Mammary epithelial cell (primary cell): ENCODE measurements at regions of chr10 and their contacts with region 1.

Region 1: GRCh38 chr10:100878291-100878910 is 34.4 kb upstream of the SLF2 start:
- DNase-seq: peak; percentile 46
- H3K4me3 ChIP-seq: no peak overlapping the region
- H3K27ac ChIP-seq: no peak overlapping the region
- H3K4me1 ChIP-seq: no peaks in the 10 kb centered on the region
- H3K27me3 ChIP-seq: no peaks in the 10 kb centered on the region
- CTCF ChIP-seq: peak; percentile 61 to 89

Region 2: DNA sequence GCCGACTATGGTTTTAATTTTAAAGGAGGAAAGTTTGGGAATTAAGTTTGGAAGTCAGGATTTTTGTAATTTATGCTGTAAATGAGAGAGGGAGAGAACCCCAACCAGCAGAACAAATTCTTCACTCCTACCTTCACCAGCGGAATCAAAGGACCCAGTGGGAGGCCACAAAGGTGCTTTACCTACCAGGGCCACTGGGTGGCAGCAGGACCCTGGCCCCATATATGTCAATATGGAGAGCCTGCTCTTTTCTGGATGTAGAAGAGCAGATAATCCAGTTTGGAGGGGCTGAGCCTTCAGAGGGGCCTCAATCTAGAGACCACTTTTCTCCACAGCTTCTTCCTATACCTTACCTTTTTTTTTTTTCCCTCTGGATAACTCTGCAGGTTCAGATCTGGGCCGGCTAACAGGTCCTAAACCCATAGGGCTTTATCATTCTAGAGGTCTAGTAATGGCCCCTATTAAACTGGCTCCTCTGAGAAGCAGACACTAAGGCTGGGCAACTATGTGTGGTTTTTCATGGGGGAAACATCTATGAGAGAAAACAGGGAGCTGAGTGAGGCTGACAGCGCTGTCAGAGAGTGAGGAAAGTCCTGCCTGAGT is 539.9 kb before region 1 on chr10:
- CTCF ChIA-PET with region 1: no interaction called
- dilution Hi-C with region 1: loop called (anchors 25 kb)
- in situ Hi-C with region 1: loop called (anchors 25 kb)
- intact Hi-C with region 1: loop called (anchors 1 kb)
- DNase-seq: peak; percentile 38
- H3K4me3 ChIP-seq: no peak overlapping the region
- H3K27ac ChIP-seq: no peak overlapping the region
- H3K4me1 ChIP-seq: no peaks in the 10 kb centered on the region
- H3K27me3 ChIP-seq: no peaks in the 10 kb centered on the region
- CTCF ChIP-seq: peak; percentile 89 to 95

Region 3: GRCh38 chr10:100481462-100482081 is 396.8 kb before region 1 on chr10:
- CTCF ChIA-PET with region 1: no interaction called
- dilution Hi-C with region 1: no loop called
- in situ Hi-C with region 1: no loop called
- intact Hi-C with region 1: loop called (anchors 1 kb)
- DNase-seq: peak; percentile 82
- H3K4me3 ChIP-seq: peak overlapping the region; percentile 12 to 47 (median 40)
- H3K27ac ChIP-seq: no peak overlapping the region
- H3K4me1 ChIP-seq: peaks cover 8% of the 10 kb centered on the region
- H3K27me3 ChIP-seq: no peaks in the 10 kb centered on the region
- CTCF ChIP-seq: no peak

Region 4: GRCh38 chr10:100551196-100551595 is 327.2 kb before region 1 on chr10:
- CTCF ChIA-PET with region 1: no interaction called
- dilution Hi-C with region 1: no loop called
- in situ Hi-C with region 1: loop called in 1 of 2 experiments (anchors 10 kb)
- intact Hi-C with region 1: no loop called
- DNase-seq: no peak
- H3K4me3 ChIP-seq: no peak overlapping the region
- H3K27ac ChIP-seq: no peak overlapping the region
- H3K4me1 ChIP-seq: no peaks in the 10 kb centered on the region
- H3K27me3 ChIP-seq: no peaks in the 10 kb centered on the region
- CTCF ChIP-seq: no peak

Region 5: DNA sequence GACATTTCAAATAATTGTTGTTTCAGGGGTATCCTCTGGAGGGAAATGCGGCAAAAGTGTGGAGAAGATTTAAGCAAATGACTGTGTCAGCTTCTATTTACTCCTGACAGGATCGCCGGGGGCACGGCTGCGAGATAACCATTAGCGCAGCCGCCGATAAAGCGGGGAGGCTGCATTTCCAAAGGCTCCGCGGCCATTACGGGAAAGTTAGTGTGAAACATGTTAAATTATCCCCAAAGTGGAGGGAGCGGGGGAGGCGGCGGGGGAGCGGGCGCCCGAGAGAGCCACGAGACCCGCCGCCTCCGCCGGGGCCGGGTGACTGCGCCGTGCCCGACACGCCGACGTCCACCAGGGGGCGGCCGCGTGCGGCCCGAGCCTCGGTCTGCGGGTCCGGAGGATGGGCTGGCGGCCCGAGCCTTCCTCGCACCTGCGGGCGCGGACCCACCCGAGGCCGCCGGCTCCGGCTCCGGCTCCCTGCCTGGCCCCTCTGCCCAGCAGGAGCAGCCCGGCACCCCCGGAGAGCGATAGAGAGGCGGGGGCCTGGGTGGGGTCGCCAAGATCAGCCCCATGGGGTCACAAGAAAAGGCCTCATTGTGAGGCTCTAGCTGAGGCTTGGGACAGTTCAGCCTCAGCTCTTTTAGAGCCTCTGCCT is 207.4 kb before region 1 on chr10:
- CTCF ChIA-PET with region 1: no interaction called
- dilution Hi-C with region 1: no loop called
- in situ Hi-C with region 1: no loop called
- intact Hi-C with region 1: loop called (anchors 2 kb)
- DNase-seq: no peak
- H3K4me3 ChIP-seq: no peak overlapping the region
- H3K27ac ChIP-seq: no peak overlapping the region
- H3K4me1 ChIP-seq: no peaks in the 10 kb centered on the region
- H3K27me3 ChIP-seq: peaks cover 18% of the 10 kb centered on the region
- CTCF ChIP-seq: peak in 1 of 2 donors; percentile 47

Region 6: GRCh38 chr10:100827819-100828737 is 50.3 kb before region 1 on chr10:
- CTCF ChIA-PET with region 1: no interaction called
- dilution Hi-C with region 1: loop called (anchors 5 kb)
- in situ Hi-C with region 1: no loop called
- intact Hi-C with region 1: no loop called
- DNase-seq: peak; percentile 3
- H3K4me3 ChIP-seq: no peak overlapping the region
- H3K27ac ChIP-seq: no peak overlapping the region
- H3K4me1 ChIP-seq: peaks cover 21% of the 10 kb centered on the region
- H3K27me3 ChIP-seq: peaks cover 56% of the 10 kb centered on the region
- CTCF ChIP-seq: no peak

Region 7: DNA sequence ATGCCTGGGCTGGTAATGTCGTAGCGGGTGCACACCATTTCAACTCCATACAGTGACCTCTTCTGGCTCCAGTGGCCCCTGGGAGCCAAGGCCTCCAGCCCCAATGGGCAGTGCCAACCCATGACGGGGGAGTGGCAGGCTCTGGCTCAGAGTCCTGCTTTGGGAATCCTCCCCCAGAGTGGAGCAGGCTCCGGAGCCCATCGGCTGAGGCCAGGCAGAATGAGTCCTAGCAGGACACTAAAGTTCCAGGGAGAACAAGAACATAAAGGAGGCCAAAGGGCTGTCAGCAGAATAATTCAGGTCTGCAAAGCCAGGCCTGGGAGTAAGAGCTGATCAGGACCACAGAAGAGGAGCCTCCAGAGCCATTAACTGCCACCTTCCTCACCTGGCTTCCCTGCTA is 317.5 kb after region 1 on chr10:
- CTCF ChIA-PET with region 1: no interaction called
- dilution Hi-C with region 1: no loop called
- in situ Hi-C with region 1: no loop called
- intact Hi-C with region 1: no loop called
- DNase-seq: no peak
- H3K4me3 ChIP-seq: no peak overlapping the region
- H3K27ac ChIP-seq: no peak overlapping the region
- H3K4me1 ChIP-seq: peaks cover under 1% of the 10 kb centered on the region
- H3K27me3 ChIP-seq: no peaks in the 10 kb centered on the region
- CTCF ChIP-seq: no peak